ENCODE measurements at regions of chr2 and their contacts with region 1.

Region 1: DNA sequence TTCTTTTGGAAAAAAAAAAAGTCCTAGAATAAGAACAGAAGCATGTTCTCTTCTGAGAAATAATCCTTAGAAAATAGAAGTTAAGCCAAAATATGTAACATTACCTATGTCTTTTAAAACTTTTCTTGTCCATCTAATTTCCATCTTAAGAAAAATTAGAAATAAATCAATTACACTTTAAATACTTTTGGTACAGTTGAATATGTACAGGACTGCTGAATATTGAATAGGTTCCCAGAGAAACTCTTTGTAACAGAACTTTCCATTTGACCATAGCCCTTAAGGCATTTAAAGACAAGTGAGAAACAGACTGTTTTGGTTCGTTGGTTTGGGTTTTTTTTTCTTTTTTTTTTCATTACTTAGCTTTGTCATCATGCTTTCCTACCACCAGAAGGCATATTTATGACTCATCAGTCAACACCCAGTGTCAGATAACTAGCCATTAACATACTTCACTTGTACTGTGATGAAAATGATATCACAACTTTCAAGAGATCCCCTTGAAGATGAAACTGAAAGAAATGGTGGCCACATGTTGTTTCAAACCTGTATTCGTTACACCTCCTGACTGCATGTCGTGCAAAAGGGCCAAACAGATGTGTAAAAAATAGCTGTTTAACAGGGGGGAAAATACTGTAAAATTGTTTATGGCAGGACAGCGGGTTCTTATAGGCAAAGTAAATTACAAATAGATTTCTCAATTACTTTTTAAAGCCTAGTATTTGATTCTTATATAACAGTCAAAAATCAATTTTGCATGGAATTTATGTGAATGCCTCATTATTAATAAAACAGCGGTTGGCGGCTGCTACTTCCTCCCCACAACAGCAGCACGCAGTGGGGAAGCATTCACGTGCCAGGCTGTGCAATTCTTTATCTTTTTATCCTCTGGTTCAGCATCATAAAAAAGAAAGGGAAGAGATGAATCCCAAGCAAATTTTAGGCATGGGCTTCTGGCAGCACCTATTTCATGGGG is 280.7 kb upstream of the HNRNPA3 start:
- DNase-seq: peak; percentile 30 to 75
- ATAC-seq: peak; percentile 93 to 97 (median 97)
- H3K4me3 ChIP-seq: no peak overlapping the region
- H3K4me3 Mint-ChIP-seq: peak overlapping the region; percentile 75
- H3K27ac ChIP-seq: peak overlapping the region; percentile 58
- H3K27ac Mint-ChIP-seq: peak overlapping the region; percentile 87 to 91
- H3K4me1 ChIP-seq: peaks cover 4% of the 10 kb centered on the region
- H3K4me1 Mint-ChIP-seq: peaks cover 14 to 16% of the 10 kb centered on the region in 2 donors
- H3K27me3 ChIP-seq: no peaks in the 10 kb centered on the region
- H3K27me3 Mint-ChIP-seq: no peaks in the 10 kb centered on the region
- CTCF ChIP-seq: no peak

Region 2: GRCh38 chr2:176852667-176853066 is 79.2 kb before region 1 on chr2:
- intact Hi-C with region 1: loop called (anchors 2 kb)
- DNase-seq: peak; percentile 51 to 74
- ATAC-seq: peak; percentile 93 to 100 (median 96)
- H3K4me3 ChIP-seq: no peak overlapping the region
- H3K4me3 Mint-ChIP-seq: peak overlapping the region; percentile 62
- H3K27ac ChIP-seq: peak overlapping the region; percentile 4
- H3K27ac Mint-ChIP-seq: peak overlapping the region; percentile 38 to 49
- H3K4me1 ChIP-seq: peaks cover 21% of the 10 kb centered on the region
- H3K4me1 Mint-ChIP-seq: peaks cover 80 to 83% of the 10 kb centered on the region in 2 donors
- H3K27me3 ChIP-seq: no peaks in the 10 kb centered on the region
- H3K27me3 Mint-ChIP-seq: no peaks in the 10 kb centered on the region
- CTCF ChIP-seq: no peak

Measured in natural killer cell (primary cell).